ENCODE measurements at regions of chr7 and their contacts with region 1.

Region 1: GRCh38 chr7:108246227-108246837 is 116.2 kb upstream of the LAMB4 start:
- DNase-seq: peak; percentile 87 to 94
- H3K4me3 ChIP-seq: peak overlapping the region; percentile 15
- H3K27ac ChIP-seq: peak overlapping the region; percentile 92
- H3K4me1 ChIP-seq: peaks cover 46% of the 10 kb centered on the region
- H3K27me3 ChIP-seq: no peaks in the 10 kb centered on the region
- CTCF ChIP-seq: no peak

Region 2: GRCh38 chr7:108181073-108181985 is 65.0 kb before region 1 on chr7:
- CTCF ChIA-PET with region 1: no interaction called
- POLR2A ChIA-PET with region 1: no interaction called
- intact Hi-C with region 1: loop called (anchors 1 kb)
- DNase-seq: peak; percentile 29 to 43
- H3K4me3 ChIP-seq: no peak overlapping the region
- H3K27ac ChIP-seq: no peak overlapping the region
- H3K4me1 ChIP-seq: no peaks in the 10 kb centered on the region
- H3K27me3 ChIP-seq: no peaks in the 10 kb centered on the region
- CTCF ChIP-seq: peak; percentile 91

Region 3: GRCh38 chr7:108299291-108299898 is 53.1 kb after region 1 on chr7:
- CTCF ChIA-PET with region 1: no interaction called
- POLR2A ChIA-PET with region 1: interaction called, 3 read pairs
- intact Hi-C with region 1: loop called (anchors 2 kb)
- DNase-seq: peak; percentile 53 to 91
- H3K4me3 ChIP-seq: no peak overlapping the region
- H3K27ac ChIP-seq: peak overlapping the region; percentile 63
- H3K4me1 ChIP-seq: peaks cover 30% of the 10 kb centered on the region
- H3K27me3 ChIP-seq: no peaks in the 10 kb centered on the region
- CTCF ChIP-seq: no peak

Region 4: GRCh38 chr7:108395426-108395825 is 149.1 kb after region 1 on chr7:
- CTCF ChIA-PET with region 1: no interaction called
- POLR2A ChIA-PET with region 1: no interaction called
- intact Hi-C with region 1: no loop called
- DNase-seq: no peak
- H3K4me3 ChIP-seq: no peak overlapping the region
- H3K27ac ChIP-seq: no peak overlapping the region
- H3K4me1 ChIP-seq: no peaks in the 10 kb centered on the region
- H3K27me3 ChIP-seq: no peaks in the 10 kb centered on the region
- CTCF ChIP-seq: no peak

Region 5: DNA sequence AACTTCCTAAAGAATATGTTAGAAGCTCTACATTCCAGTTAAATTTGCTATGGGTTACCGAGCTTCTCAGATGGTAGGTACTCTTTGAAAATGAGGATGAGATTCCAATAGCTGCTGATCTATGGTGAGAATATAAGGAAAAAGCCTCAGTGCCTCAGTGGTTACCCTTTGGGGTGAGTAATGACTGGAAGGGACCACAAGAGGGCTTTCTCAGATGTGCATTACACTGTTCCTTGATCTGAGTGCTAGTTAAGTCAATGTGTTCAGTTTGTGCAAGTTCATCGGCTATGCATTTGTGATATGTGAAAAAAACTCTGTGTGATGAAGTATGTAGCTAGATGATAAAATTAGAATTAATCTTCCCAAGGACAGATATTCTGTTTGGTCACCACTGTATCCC is 206.4 kb after region 1 on chr7:
- CTCF ChIA-PET with region 1: no interaction called
- POLR2A ChIA-PET with region 1: interaction called, 4 read pairs
- intact Hi-C with region 1: loop called (anchors 1 kb)
- DNase-seq: no peak
- H3K4me3 ChIP-seq: no peak overlapping the region
- H3K27ac ChIP-seq: no peak overlapping the region
- H3K4me1 ChIP-seq: 0 out of 2 replicates have a peak, but pooled peaks cover 12% of the 10 kb centered on the region
- H3K27me3 ChIP-seq: no peaks in the 10 kb centered on the region
- CTCF ChIP-seq: peak; percentile 66

Region 6: GRCh38 chr7:108459931-108460551 is 213.7 kb after region 1 on chr7:
- CTCF ChIA-PET with region 1: no interaction called
- POLR2A ChIA-PET with region 1: interaction called, 4 read pairs
- intact Hi-C with region 1: loop called (anchors 1 kb)
- DNase-seq: peak in 1 of 2 experiments; percentile 38
- H3K4me3 ChIP-seq: no peak overlapping the region
- H3K27ac ChIP-seq: no peak overlapping the region
- H3K4me1 ChIP-seq: 0 out of 2 replicates have a peak, but pooled peaks cover 10% of the 10 kb centered on the region
- H3K27me3 ChIP-seq: no peaks in the 10 kb centered on the region
- CTCF ChIP-seq: peak; percentile 71

Region 7: GRCh38 chr7:108486291-108486966 is 240.1 kb after region 1 on chr7:
- CTCF ChIA-PET with region 1: no interaction called
- POLR2A ChIA-PET with region 1: no interaction called
- intact Hi-C with region 1: no loop called
- DNase-seq: no peak
- H3K4me3 ChIP-seq: no peak overlapping the region
- H3K27ac ChIP-seq: no peak overlapping the region
- H3K4me1 ChIP-seq: no peaks in the 10 kb centered on the region
- H3K27me3 ChIP-seq: no peaks in the 10 kb centered on the region
- CTCF ChIP-seq: no peak

Region 8: DNA sequence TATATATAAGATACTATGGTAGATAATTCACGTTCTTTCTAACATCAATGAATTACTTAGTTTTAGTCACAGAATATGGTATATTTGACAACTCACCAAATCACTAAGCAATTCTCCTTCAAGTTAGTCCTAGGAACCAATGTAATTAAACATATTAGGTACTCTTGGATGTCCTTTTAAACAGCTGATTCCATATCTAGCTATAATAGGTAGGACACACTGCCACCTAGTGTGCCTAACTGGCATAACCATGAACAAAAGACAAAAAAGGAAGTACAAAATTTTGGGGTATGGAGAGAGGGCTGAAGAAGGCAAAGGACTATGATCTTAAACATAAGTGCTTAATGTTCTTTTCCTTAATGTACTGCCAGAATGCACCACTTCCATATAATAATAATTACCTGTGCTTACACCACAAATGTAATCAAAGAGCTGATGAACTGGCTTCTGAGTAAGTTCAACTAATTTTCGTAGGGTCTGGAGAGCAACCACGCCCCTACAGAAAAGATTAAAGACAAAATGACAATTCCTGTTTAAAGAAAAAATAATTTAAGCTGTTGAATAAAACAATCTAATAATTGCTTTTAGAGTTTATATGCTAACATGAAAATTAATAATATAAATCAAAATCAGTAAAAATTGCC is 250.9 kb after region 1 on chr7:
- CTCF ChIA-PET with region 1: no interaction called
- POLR2A ChIA-PET with region 1: no interaction called
- intact Hi-C with region 1: loop called (anchors 1 kb)
- DNase-seq: peak; percentile 40 to 49
- H3K4me3 ChIP-seq: no peak overlapping the region
- H3K27ac ChIP-seq: no peak overlapping the region
- H3K4me1 ChIP-seq: no peaks in the 10 kb centered on the region
- H3K27me3 ChIP-seq: no peaks in the 10 kb centered on the region
- CTCF ChIP-seq: peak; percentile 92